Activated CD4-positive, alpha-beta T cell treated with anti-CD3 and anti-CD28 coated beads, Interleukin-2, amount 10 ng/mL, durations not matched to agents 24 days and 14 days (primary cell): ENCODE measurements at regions of chr7 and their contacts with region 1.

Region 1: DNA sequence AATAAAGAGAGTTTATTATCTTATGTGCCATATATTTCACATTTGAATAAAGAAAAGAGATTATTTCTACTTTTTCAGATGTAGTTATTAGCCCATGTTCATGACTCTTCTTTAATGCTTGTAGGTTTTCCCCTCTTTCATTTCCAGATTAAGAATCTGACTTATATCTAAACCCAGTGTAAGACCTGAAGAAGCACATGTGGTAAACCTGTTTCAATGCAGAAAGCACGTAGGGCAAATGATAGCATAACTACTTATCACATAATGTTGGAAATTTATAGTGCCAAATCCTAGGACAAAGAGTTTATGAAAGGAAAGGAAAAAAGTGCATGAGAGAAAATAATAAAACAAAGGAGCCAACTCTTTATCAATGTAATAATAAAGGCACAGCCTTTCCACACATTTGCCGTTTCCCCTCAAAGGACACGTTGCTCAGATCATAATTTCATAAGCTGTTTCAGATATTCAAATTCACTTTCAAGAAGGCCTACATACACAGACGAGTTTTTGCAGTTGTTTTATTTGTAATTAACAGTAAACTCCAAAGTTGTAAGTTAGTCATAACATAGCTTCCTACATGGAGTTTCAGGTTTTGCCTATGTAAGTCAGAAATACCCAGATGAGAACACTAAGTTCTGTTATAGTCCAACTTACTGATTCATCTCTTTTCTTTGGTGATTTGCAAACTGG is 88.8 kb upstream of the MDFIC start:
- DNase-seq: no peak
- H3K4me3 Mint-ChIP-seq: peak overlapping the region; percentile 67
- H3K27ac Mint-ChIP-seq: peak overlapping the region; percentile 95
- H3K4me1 Mint-ChIP-seq: peaks cover 26% of the 10 kb centered on the region
- H3K27me3 Mint-ChIP-seq: no peaks in the 10 kb centered on the region

Region 2: GRCh38 chr7:114370194-114370593 is 462.9 kb before region 1 on chr7:
- intact Hi-C with region 1: no loop called
- DNase-seq: no peak
- H3K4me3 Mint-ChIP-seq: no peak overlapping the region
- H3K27ac Mint-ChIP-seq: no peak overlapping the region
- H3K4me1 Mint-ChIP-seq: no peaks in the 10 kb centered on the region
- H3K27me3 Mint-ChIP-seq: no peaks in the 10 kb centered on the region

Region 3: GRCh38 chr7:114715907-114716306 is 117.1 kb before region 1 on chr7:
- intact Hi-C with region 1: loop called (anchors 2 kb)
- DNase-seq: no peak
- H3K4me3 Mint-ChIP-seq: no peak overlapping the region
- H3K27ac Mint-ChIP-seq: no peak overlapping the region
- H3K4me1 Mint-ChIP-seq: peaks cover 7% of the 10 kb centered on the region
- H3K27me3 Mint-ChIP-seq: peaks cover 4% of the 10 kb centered on the region

Region 4: DNA sequence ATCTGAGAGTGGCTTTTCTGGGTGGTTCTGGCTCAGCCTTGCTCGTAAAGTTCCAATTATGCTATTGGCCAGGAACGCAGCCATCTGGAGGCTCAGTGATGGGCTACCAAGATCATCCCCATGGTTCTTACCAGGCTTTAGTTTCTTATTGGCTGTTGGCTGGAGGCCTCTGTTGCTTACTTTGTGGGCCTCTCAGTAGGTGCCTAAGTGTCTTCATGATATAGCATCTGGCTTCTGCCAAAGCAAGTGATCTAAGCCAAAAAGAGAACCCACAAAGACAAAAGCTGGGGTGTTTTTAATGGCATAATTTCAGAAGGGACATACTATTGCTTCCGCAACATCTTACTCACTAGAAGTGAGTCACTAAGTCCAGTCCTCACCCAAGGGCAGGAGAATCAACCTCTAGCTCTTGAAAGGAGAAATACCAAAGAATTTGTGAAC is 43.2 kb before region 1 on chr7:
- intact Hi-C with region 1: loop called (anchors 1 kb)
- DNase-seq: peak; percentile 42
- H3K4me3 Mint-ChIP-seq: no peak overlapping the region
- H3K27ac Mint-ChIP-seq: peak overlapping the region; percentile 87
- H3K4me1 Mint-ChIP-seq: peaks cover 37% of the 10 kb centered on the region
- H3K27me3 Mint-ChIP-seq: no peaks in the 10 kb centered on the region

Region 5: DNA sequence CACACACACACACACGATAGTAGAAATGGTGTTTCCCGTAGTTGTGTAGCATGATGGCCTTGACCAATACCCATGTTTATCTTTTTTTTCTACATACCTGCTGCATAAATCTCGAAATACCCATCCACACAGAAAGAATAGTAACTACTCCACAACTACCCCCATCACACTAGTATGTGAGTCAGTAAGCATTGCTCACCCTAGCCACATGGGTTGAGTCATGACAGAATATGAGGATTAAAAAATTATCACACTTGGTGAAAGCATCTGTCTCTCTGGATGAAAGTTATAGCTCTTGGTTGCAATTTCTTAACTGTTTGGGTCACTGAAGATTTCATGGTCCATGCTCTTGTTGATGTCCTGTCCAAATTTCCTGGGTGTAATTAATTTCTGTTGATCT is 14.6 kb before region 1 on chr7:
- intact Hi-C with region 1: loop called (anchors 1 kb)
- DNase-seq: no peak
- H3K4me3 Mint-ChIP-seq: no peak overlapping the region
- H3K27ac Mint-ChIP-seq: peak overlapping the region; percentile 30
- H3K4me1 Mint-ChIP-seq: peaks cover 29% of the 10 kb centered on the region
- H3K27me3 Mint-ChIP-seq: no peaks in the 10 kb centered on the region

Region 6: DNA sequence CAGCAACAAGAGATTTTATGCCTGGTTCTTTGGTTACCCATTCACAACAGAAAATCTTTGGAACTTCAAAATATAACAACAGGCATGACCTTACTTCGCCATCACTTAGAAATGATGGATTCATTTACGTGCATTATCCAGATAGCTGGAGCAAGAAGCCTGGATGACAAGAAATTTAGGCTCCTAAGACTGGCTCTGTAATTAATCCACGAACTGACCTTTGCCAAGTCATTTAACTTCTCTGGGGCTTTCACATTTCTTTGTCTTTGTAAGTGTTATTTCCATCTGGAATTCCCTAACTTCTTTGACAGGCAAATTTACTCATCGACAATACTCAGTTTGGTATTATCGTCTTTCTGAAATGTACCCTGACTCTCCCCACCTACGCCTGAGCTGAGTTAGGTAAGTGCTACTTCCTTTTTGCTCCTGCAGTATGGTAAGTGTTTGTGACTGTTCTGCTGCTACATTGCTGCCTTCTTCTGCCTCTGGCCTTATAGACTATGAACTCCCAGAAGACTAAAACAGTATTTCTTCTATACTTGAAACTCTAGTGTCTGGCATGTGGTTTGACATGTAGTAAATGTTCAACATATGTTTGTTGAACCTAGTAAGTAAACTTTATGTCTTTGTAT is 83.3 kb after region 1 on chr7:
- intact Hi-C with region 1: loop called (anchors 1 kb)
- DNase-seq: peak; percentile 72
- H3K4me3 Mint-ChIP-seq: peak overlapping the region; percentile 62
- H3K27ac Mint-ChIP-seq: peak overlapping the region; percentile 99
- H3K4me1 Mint-ChIP-seq: peaks cover 49% of the 10 kb centered on the region
- H3K27me3 Mint-ChIP-seq: no peaks in the 10 kb centered on the region

Region 7: GRCh38 chr7:114930829-114931655 is 98.0 kb after region 1 on chr7:
- intact Hi-C with region 1: loop called (anchors 1 kb)
- DNase-seq: no peak
- H3K4me3 Mint-ChIP-seq: no peak overlapping the region
- H3K27ac Mint-ChIP-seq: no peak overlapping the region
- H3K4me1 Mint-ChIP-seq: peaks cover 44% of the 10 kb centered on the region
- H3K27me3 Mint-ChIP-seq: no peaks in the 10 kb centered on the region